ENCODE measurements at regions of chr5 and their contacts with region 1.

Region 1: DNA sequence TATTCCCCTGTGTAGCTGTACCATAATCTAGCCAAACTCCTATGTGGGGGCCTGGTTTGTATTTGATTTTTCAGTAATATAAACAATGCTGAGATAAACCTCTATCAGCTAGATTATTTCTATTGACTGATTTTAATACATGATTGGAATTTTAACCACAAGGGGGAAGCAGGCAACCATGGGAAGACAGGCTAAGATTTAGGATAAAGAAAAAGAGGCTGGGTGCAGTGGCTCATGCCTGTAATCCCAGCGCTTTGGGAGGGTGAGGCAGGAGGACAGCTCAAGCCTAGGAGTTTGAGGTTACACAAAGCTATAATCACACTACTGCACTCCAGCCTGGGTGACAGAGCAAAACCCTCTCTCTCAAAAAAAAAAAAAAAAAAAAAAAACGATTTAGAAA is 18.1 kb upstream of the GPX3 start:
- DNase-seq: no peak
- H3K4me3 ChIP-seq: no peak overlapping the region
- H3K27ac ChIP-seq: no peak overlapping the region
- H3K4me1 ChIP-seq: peaks cover 0 to 26% of the 10 kb centered on the region in 2 donors
- H3K27me3 ChIP-seq: no peaks in the 10 kb centered on the region
- CTCF ChIP-seq: peak; percentile 45 to 72 (median 56)

Region 2: DNA sequence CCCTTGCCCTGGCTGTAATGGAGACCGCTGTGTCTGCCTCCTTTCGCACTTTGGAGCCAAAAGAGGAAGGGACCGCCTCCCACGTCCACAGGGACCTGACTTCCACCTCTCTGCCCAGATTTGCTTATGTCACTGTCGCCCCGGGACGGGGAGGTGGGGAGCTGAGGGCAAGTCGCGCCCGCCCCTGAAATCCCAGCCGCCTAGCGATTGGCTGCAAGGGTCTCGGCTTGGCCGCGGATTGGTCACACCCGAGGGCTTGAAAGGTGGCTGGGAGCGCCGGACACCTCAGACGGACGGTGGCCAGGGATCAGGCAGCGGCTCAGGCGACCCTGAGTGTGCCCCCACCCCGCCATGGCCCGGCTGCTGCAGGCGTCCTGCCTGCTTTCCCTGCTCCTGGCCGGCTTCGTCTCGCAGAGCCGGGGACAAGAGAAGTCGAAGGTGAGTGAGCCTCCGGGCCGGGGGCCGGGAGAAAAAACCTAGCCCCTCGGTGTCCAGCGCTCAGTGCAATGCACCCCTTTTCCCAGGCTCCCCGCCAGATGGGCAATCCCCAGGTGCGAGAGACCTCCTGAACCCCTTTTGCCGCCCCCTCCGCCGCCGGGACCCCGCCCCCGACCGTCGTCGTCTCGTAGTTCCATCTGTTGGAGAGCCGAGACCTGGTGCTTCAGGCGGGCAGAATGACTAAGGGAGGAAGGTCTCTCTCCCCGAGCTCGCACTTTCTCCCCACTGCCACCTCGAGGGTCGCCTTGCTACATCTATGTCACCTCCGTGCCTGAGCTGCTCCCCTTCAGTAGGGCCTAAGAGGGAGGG is 18.3 kb after region 1 on chr5 and contains the start of gene GPX3:
- intact Hi-C with region 1: loop called (anchors 2 kb)
- DNase-seq: peak; percentile 92 to 98
- H3K4me3 ChIP-seq: peak within 1 kb of the TSS; percentile 76 to 87
- H3K27ac ChIP-seq: peak within 1 kb of the TSS; percentile 91 to 93
- H3K4me1 ChIP-seq: peaks cover 23 to 36% of the 10 kb centered on the region in 2 donors
- H3K27me3 ChIP-seq: no peaks in the 10 kb centered on the region
- CTCF ChIP-seq: no peak
- total RNA-seq, gene GPX3: 2,056 TPM

Region 3: DNA sequence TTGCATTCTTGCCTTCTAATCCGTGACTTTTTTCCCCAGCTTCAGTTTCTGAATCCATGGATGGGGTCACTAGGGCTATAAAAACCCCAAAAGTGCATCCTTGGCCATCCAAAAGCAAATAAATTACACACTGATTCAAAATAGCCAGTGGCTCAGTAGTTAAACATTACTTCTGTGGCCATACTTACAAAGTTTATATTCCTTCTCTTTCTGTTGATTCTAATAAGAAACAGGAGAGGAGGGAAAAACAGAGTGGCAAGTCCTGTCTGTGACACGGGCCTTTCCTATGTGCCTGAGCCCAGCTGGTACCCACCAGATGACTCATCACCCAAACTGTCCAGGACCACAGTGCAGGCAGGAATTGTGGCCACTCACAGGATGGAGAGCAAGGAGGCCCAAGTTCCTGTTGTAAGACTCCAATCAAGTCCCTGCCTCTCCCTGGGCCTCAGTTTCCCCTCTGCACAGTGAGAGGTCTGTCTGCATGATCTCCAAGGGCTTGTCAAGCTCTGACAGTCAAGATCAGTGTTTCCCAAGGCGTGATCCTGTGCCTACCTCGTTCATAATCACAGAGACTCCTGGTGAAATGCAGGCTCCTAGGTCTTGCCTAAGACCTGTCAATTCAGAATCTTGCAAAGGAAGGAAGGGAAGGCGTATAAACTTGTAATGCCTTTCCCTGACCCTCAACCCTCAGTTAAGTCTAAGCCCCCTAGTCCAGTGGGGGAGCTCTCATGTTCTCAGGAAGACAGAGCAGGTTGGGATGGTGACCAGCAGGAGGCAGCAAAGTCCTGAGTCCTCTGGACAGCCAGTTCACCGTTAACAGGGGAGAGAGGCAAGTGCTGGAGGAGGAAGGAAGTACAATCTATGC is 49.0 kb after region 1 on chr5:
- intact Hi-C with region 1: loop called (anchors 1 kb)
- DNase-seq: peak in 1 of 2 donors; percentile 91
- H3K4me3 ChIP-seq: no peak overlapping the region
- H3K27ac ChIP-seq: no peak overlapping the region
- H3K4me1 ChIP-seq: peaks cover 0 to 6% of the 10 kb centered on the region in 2 donors
- H3K27me3 ChIP-seq: no peaks in the 10 kb centered on the region
- CTCF ChIP-seq: peak; percentile 80 to 87 (median 86)

Region 4: DNA sequence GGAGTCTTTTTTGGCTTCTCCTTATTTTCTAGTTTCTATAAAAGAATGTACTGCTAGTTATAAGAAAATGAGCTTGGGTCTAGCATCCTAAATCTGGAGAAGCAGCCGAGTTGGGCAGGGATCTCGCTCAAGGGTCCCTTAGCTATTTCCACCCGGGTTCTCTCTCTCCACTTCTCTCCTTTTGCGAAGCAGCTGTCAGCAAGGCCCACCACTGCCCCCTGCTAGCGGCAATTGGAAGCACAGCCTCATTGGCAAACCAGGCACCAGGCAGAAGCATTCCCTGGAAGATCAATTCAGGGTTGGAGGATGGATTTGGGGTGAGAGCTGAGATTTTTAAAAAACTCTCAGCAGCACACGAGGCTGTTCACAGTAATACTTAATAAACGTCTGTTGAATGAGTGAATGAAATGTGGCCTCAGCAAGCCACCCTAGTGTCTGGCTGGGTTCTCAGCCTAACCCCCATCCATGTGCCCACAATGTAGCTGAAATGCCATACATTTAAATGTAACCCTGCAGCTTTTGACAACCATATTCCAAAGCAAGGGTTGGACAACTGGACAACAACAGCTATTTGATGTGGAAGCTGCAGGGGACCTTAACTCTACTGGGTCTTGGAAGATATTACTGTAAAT is 113.1 kb after region 1 on chr5:
- intact Hi-C with region 1: loop called (anchors 1 kb)
- DNase-seq: peak in 1 of 2 donors; percentile 88
- H3K4me3 ChIP-seq: no peak overlapping the region
- H3K27ac ChIP-seq: no peak overlapping the region
- H3K4me1 ChIP-seq: no peaks in the 10 kb centered on the region
- H3K27me3 ChIP-seq: no peaks in the 10 kb centered on the region
- CTCF ChIP-seq: peak; percentile 87 to 95 (median 91)

Region 5: GRCh38 chr5:151174612-151175101 is 172.4 kb after region 1 on chr5:
- intact Hi-C with region 1: no loop called
- DNase-seq: no peak
- H3K4me3 ChIP-seq: peak overlapping the region in 1 of 2 donors; percentile 28
- H3K27ac ChIP-seq: no peak overlapping the region
- H3K4me1 ChIP-seq: no peaks in the 10 kb centered on the region
- H3K27me3 ChIP-seq: no peaks in the 10 kb centered on the region
- CTCF ChIP-seq: no peak

Region 6: DNA sequence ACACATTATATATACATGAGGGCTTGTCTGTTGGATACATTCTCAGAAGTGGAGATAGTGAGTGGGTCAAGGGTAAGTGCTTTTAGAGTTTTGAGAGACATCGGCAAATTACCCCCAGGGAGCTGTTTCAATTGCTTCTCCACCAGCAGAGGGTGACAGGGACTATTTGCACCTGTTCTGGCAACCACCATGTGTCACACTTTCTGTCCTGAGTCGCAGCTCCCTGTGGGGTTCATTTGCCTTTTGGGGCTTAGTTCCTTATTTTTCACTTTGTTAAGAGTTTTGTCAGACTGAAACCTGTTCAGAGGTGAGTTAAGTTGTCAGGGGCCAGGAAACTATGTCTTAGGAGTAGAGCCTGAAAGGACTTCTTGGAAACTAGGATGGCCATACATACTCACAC is 425.0 kb after region 1 on chr5:
- intact Hi-C with region 1: no loop called
- DNase-seq: no peak
- H3K4me3 ChIP-seq: no peak overlapping the region
- H3K27ac ChIP-seq: no peak overlapping the region
- H3K4me1 ChIP-seq: no peaks in the 10 kb centered on the region
- H3K27me3 ChIP-seq: no peaks in the 10 kb centered on the region
- CTCF ChIP-seq: no peak